Naive thymus-derived CD8-positive, alpha-beta T cell (primary cell): ENCODE measurements at regions of chr5 and their contacts with region 1.

Region 1: DNA sequence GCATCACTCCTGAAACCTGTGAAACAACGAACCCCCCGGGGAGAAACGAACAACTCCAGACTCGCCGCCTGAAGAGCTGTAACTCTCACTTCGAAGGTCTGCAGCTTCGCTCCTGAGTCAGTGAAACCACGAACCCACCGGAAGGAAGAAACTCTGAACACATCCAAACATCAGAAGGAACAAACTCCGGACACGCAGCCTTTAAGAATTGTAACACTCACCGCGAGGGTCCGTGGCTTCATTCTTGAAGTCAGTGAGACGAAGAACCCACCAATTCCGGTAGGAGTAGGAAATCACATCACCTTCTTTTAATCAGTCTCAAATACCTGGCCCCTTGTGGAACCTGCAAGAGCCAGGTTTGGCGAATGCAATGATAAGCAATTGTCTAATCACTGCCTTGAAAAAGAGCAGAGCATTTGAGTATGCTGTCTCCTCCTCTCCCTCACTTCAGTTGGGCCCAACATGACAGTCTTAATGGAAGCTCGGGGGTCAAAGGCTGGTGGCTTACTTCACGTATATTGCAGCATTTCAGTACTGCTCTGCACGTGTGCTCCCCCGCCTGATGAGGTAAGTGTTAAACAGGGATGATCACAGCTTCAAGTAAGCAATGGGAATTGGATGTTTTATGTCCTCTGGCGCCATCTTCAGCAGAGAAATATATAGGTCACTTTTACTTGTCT is 473 bp downstream of the IRGM start:
- DNase-seq: peak; percentile 19 to 83 (median 62)
- ATAC-seq: peak; percentile 95
- H3K4me3 Mint-ChIP-seq: peak overlapping the region; percentile 73 to 90 (median 87)
- H3K27ac Mint-ChIP-seq: peak overlapping the region in 9 of 10 donors; percentile 73 to 92 (median 88)
- H3K4me1 Mint-ChIP-seq: peaks cover 13 to 22% (median 16%) of the 10 kb centered on the region in 4 donors
- H3K27me3 Mint-ChIP-seq: peaks cover 0 to 5% (median 0%) of the 10 kb centered on the region in 5 donors

Region 2: GRCh38 chr5:150758531-150759333 is 88.1 kb before region 1 on chr5 and contains the start of gene DCTN4:
- POLR2A ChIA-PET with region 1: interaction called, 10 read pairs
- DNase-seq: peak; percentile 86 to 99 (median 94)
- ATAC-seq: peak; percentile 93 to 94
- H3K4me3 Mint-ChIP-seq: peak within 1 kb of the TSS in 1 of 10 donors; percentile 4
- H3K27ac Mint-ChIP-seq: no peak within 1 kb of the TSS
- H3K4me1 Mint-ChIP-seq: peaks cover 12 to 50% (median 31%) of the 10 kb centered on the region in 4 donors
- H3K27me3 Mint-ChIP-seq: peaks cover 0 to 14% (median 0%) of the 10 kb centered on the region in 5 donors
- polyA plus RNA-seq, gene DCTN4: 8.1 to 11.5 (median 9.5) TPM

Region 3: DNA sequence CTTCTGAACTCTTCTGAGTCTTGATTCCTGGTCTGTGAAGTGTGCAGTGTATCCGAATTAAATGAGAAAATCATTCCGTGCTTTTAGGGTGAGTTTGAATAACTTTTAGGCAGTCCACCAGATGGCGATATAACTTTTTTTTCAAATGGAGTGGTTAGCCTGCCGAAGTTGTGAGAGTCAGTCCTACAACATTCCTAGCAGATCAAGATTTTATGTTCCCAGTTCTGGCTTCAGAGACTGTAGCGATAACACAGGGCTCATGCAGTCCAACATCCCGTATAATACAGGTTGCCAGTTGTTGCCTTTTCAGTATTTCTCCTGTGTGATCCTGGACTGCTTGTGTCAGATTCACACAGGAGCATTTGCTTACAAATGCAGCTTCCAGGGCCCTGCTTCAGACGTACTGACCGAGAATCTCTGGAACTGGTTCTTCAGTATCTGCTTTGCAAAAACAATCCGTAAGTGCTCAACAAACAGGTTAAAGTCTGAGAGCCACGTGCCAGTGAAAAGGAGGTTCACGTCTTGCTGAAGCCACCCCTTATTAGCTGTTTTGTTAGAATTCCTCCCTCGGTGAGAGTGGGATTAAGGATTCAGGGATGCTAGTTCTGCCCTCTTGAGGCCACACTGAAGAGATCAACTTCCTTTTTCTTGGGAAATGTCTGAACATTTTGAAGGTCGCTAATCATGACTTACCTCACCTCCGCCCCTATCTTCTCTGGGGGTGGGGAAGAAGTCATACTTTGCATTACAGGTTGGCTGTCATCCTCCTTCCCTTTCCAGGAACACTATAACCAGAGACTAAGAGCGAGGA is 45.5 kb before region 1 on chr5:
- POLR2A ChIA-PET with region 1: interaction called, 11 read pairs
- DNase-seq: peak in 3 of 10 donors; percentile 54 to 56 (median 55)
- ATAC-seq: peak; percentile 48 to 64
- H3K4me3 Mint-ChIP-seq: no peak overlapping the region
- H3K27ac Mint-ChIP-seq: peak overlapping the region in 2 of 10 donors; percentile 35 to 45
- H3K4me1 Mint-ChIP-seq: peaks cover 3 to 8% (median 7%) of the 10 kb centered on the region in 4 donors
- H3K27me3 Mint-ChIP-seq: peaks cover 0 to 17% (median 0%) of the 10 kb centered on the region in 5 donors

Region 4: DNA sequence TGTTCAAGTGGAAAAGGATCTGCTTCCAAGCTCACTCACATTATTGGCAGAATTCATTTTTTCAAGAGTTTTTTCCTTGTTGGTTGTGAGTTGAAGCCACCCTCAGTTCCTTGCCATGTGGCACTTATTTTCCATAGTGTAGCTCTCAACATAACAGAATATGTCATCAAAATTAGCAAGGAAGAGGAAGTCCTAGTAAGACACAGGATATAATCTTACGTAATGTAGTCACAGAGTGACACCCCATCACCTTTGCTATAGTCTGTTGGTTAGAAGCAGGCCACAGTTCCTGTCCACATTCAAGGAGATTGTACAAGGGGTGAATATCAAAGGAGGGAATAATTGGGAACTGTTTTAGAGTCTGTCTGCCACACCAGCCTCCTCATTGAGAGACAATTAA is 15.3 kb after region 1 on chr5:
- POLR2A ChIA-PET with region 1: no interaction called
- DNase-seq: no peak
- ATAC-seq: no peak
- H3K4me3 Mint-ChIP-seq: no peak overlapping the region
- H3K27ac Mint-ChIP-seq: no peak overlapping the region
- H3K4me1 Mint-ChIP-seq: no peaks in the 10 kb centered on the region
- H3K27me3 Mint-ChIP-seq: peaks cover 0 to 8% (median 4%) of the 10 kb centered on the region in 5 donors